Activated CD4-positive, alpha-beta memory T cell treated with anti-CD3 and anti-CD28 coated beads for 36 hours (primary cell): ENCODE measurements at regions of chr3 and their contacts with region 1.

Region 1: DNA sequence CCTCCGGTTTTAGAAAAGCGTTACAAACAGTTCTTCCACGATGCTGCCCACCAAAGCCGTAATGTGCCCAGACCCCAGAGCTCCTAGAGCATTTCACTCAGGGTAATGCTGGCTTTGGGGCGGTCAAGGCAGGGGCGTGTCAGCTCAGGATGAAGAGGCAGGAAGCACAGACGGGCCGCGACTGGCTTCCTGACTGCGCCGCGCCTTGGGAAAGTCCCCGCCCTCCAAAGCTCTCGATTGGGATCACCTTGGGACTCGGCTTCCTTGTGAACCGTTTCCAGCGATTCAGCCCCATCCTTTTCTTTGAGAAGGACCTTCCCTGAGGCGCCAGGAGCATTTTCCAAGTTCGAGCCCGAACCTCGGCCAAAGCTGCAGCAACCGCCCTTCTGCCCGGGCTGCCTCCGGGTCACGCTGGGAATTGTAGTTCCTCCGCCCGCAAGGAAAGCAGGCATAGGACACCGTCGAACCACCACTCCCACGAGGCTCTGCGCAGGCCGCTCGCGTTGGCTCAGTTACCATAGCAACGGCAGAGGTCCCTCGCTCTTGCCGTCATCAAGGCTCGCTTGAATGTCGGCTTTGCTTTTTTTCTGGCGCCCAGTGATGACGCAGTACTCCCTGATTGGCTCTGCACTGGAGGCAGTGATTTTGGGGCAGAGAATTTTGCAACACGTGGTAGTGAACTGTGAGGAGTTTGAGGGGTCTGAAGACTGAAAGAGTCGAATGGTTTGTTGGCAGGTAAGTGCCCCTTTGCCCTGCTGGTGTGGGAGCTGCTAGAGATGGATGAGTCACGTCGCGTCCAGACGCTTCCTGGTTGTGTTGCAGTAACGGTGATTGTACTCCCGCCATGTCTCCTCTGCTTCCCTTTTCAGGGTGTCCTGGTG is at the starts of genes CCDC191 and QTRT2:
- DNase-seq: peak; percentile 99
- H3K4me3 Mint-ChIP-seq: peak within 1 kb of the TSS; percentile 94
- H3K27ac Mint-ChIP-seq: peak within 1 kb of the TSS; percentile 89
- H3K4me1 Mint-ChIP-seq: peaks cover 28% of the 10 kb centered on the region
- H3K27me3 Mint-ChIP-seq: no peaks in the 10 kb centered on the region
- total RNA-seq, gene CCDC191: 3.5 TPM
- total RNA-seq, gene QTRT2: 27.2 to 30.7 TPM

Region 2: GRCh38 chr3:113838631-113839209 is 217.7 kb before region 1 on chr3 and contains the start of gene GRAMD1C:
- CTCF ChIA-PET with region 1: interaction called, 3 read pairs
- POLR2A ChIA-PET with region 1: no interaction called
- intact Hi-C with region 1: loop called (anchors 5 kb)
- DNase-seq: peak; percentile 89
- H3K4me3 Mint-ChIP-seq: peak within 1 kb of the TSS; percentile 68
- H3K27ac Mint-ChIP-seq: no peak within 1 kb of the TSS
- H3K4me1 Mint-ChIP-seq: peaks cover 6% of the 10 kb centered on the region
- H3K27me3 Mint-ChIP-seq: no peaks in the 10 kb centered on the region
- total RNA-seq, gene GRAMD1C: 0.64 to 1.2 TPM